CD4-positive, alpha-beta T cell (primary cell): ENCODE measurements at regions of chr12 and their contacts with region 1.

Region 1: DNA sequence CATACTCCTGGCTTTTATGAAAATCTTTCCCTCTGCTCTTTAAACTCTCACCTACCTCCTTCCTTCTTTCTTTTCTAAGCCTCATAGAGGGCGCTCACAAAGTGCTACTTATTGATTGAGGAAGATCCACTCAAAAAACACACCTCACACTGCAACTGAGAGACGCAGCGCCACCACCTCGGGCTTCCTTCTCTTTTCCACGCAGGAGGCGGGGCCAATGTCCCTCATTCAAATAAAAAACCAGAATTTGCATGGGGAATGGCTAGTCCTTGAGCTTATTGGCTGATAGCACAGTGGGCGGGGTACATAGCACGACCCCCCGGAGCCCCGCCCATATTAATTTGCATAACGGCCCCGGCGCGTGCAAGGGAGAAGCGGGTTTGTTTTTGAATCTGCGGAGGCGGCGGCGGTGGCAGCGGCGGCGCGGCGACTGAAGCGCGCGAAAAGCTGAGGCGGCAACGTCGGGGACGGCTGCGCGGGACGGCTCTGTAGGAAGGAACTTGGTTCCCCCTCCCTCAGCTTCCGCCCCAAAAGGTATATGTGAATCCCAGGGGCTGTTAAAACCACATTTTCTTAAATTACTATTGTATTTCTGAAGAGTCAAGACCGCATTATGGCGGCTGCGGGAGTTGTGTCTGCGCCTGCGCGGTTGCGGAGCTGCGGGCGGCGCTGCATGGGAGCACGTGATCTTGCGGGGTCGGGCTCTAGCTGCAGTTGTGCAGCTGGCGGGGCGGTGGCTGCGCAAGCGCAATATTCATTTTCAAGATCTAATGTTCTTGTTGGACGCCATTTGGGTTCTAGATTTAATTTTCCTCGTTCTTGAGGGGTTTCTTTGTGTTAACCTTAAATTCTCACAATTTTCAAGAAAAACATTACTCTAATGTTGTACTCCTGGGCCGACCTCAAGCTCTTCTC is at the start of gene ATF7IP:
- DNase-seq: peak; percentile 90 to 99 (median 95)
- ATAC-seq: peak; percentile 86
- H3K4me3 ChIP-seq: peak within 1 kb of the TSS; percentile 60
- H3K4me3 Mint-ChIP-seq: peak within 1 kb of the TSS; percentile 95
- H3K27ac ChIP-seq: peak within 1 kb of the TSS; percentile 89 to 93
- H3K27ac Mint-ChIP-seq: peak within 1 kb of the TSS; percentile 96
- H3K4me1 ChIP-seq: peaks cover 17% of the 10 kb centered on the region
- H3K4me1 Mint-ChIP-seq: peaks cover 51% of the 10 kb centered on the region
- H3K27me3 ChIP-seq: no peaks in the 10 kb centered on the region
- H3K27me3 Mint-ChIP-seq: no peaks in the 10 kb centered on the region
- CTCF ChIP-seq: peak; percentile 58
- total RNA-seq, gene ATF7IP: 134 to 143 TPM

Region 2: GRCh38 chr12:14185427-14186192 is 179.9 kb before region 1 on chr12:
- CTCF ChIA-PET with region 1: no interaction called
- POLR2A ChIA-PET with region 1: no interaction called
- intact Hi-C with region 1: no loop called
- DNase-seq: peak in 6 of 14 experiments; percentile 2 to 52 (median 29)
- ATAC-seq: no peak
- H3K4me3 ChIP-seq: no peak overlapping the region
- H3K4me3 Mint-ChIP-seq: no peak overlapping the region
- H3K27ac ChIP-seq: no peak overlapping the region
- H3K27ac Mint-ChIP-seq: no peak overlapping the region
- H3K4me1 ChIP-seq: no peaks in the 10 kb centered on the region
- H3K4me1 Mint-ChIP-seq: no peaks in the 10 kb centered on the region
- H3K27me3 ChIP-seq: no peaks in the 10 kb centered on the region
- H3K27me3 Mint-ChIP-seq: peaks cover 6% of the 10 kb centered on the region
- CTCF ChIP-seq: peak; percentile 52

Region 3: DNA sequence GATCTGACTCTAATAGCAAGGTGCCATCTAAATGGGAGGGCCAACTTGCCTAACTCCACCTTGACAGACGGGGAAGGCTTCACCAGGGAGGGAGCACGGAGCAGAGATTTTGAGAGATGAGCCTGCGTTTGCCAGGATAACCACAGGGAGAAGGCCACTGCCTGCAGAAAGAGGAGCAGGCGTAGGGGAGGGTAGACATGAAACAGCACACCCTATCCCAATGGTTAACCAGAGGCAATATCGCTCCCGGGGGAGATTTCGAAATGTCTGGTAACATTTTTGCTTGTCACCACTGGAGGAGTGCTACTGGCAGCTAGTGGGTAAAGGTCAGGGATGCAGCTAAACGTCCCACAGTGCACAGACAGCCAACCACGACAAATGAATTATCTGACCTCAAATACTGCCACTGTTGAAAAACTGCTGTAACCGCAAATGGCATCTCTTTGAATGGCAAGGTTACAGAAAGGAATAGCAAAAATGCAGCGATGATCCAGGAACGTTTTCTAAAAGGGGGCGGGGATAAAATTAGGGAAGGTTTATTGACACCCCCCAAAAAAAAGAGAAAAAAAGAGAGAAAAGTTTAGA is 126.1 kb before region 1 on chr12:
- CTCF ChIA-PET with region 1: interaction called, 11 read pairs
- POLR2A ChIA-PET with region 1: interaction called, 59 read pairs
- intact Hi-C with region 1: loop called in 1 of 2 experiments (anchors 2 kb)
- DNase-seq: peak in 5 of 14 experiments; percentile 8 to 66 (median 54)
- ATAC-seq: peak; percentile 62
- H3K4me3 ChIP-seq: peak overlapping the region; percentile 49
- H3K4me3 Mint-ChIP-seq: peak overlapping the region; percentile 88
- H3K27ac ChIP-seq: peak overlapping the region in 1 of 2 donors; percentile 18
- H3K27ac Mint-ChIP-seq: peak overlapping the region; percentile 87
- H3K4me1 ChIP-seq: peaks cover 19% of the 10 kb centered on the region
- H3K4me1 Mint-ChIP-seq: peaks cover 20% of the 10 kb centered on the region
- H3K27me3 ChIP-seq: no peaks in the 10 kb centered on the region
- H3K27me3 Mint-ChIP-seq: no peaks in the 10 kb centered on the region
- CTCF ChIP-seq: no peak

Region 4: GRCh38 chr12:14272956-14273907 is 92.3 kb before region 1 on chr12:
- CTCF ChIA-PET with region 1: no interaction called
- POLR2A ChIA-PET with region 1: interaction called, 17 read pairs
- intact Hi-C with region 1: no loop called
- DNase-seq: peak in 3 of 14 experiments; percentile 17 to 53 (median 42)
- ATAC-seq: no peak
- H3K4me3 ChIP-seq: no peak overlapping the region
- H3K4me3 Mint-ChIP-seq: no peak overlapping the region
- H3K27ac ChIP-seq: no peak overlapping the region
- H3K27ac Mint-ChIP-seq: no peak overlapping the region
- H3K4me1 ChIP-seq: no peaks in the 10 kb centered on the region
- H3K4me1 Mint-ChIP-seq: peaks cover 26% of the 10 kb centered on the region
- H3K27me3 ChIP-seq: no peaks in the 10 kb centered on the region
- H3K27me3 Mint-ChIP-seq: no peaks in the 10 kb centered on the region
- CTCF ChIP-seq: no peak

Region 5: DNA sequence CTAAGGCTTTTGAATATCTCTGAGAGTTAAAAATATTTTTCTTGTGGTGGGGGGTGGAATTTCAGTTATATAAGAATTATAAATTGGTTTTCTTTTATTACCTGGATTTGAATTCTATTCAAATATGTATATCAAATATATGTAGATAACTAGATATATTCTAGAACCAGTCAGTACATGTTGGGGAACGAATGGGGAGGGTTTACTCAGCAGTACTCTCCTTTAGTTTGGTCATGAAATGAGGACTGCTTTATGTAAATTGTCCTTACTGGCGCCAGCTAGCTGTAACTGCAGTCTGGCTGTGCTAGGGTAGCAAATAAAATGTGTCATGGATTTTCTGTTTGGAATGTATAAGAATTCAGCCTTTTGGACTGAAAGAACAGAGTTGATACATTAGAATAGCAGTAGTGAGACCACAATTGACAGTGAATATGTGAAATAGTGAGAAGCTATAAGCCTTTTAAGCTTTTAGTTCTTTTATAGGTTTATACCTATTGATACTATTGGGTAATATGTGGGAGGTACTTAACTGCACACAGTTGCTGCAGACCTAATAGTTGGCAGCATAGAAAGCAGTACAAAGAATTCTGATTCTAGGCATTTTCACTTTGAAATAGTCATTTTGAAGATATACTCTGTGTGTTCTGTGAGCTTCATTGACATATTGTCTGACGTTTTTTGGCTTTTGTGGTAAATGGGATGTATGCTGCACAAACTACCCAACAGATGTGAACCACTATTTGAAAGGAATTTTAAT is 28.9 kb after region 1 on chr12:
- CTCF ChIA-PET with region 1: interaction called, 31 read pairs
- POLR2A ChIA-PET with region 1: interaction called, 201 read pairs
- intact Hi-C with region 1: loop called (anchors 2 kb)
- DNase-seq: peak in 7 of 14 experiments; percentile 15 to 86 (median 36)
- ATAC-seq: peak; percentile 70
- H3K4me3 ChIP-seq: peak overlapping the region; percentile 10
- H3K4me3 Mint-ChIP-seq: peak overlapping the region; percentile 83
- H3K27ac ChIP-seq: peak overlapping the region; percentile 58 to 66
- H3K27ac Mint-ChIP-seq: peak overlapping the region; percentile 91
- H3K4me1 ChIP-seq: peaks cover 25% of the 10 kb centered on the region
- H3K4me1 Mint-ChIP-seq: peaks cover 90% of the 10 kb centered on the region
- H3K27me3 ChIP-seq: no peaks in the 10 kb centered on the region
- H3K27me3 Mint-ChIP-seq: no peaks in the 10 kb centered on the region
- CTCF ChIP-seq: no peak

Region 6: GRCh38 chr12:14417715-14418114 is 52.2 kb after region 1 on chr12:
- CTCF ChIA-PET with region 1: interaction called, 11 read pairs
- POLR2A ChIA-PET with region 1: interaction called, 207 read pairs
- intact Hi-C with region 1: loop called (anchors 1 to 2 kb)
- DNase-seq: peak; percentile 34 to 91 (median 62)
- ATAC-seq: peak; percentile 65
- H3K4me3 ChIP-seq: peak overlapping the region; percentile 33
- H3K4me3 Mint-ChIP-seq: peak overlapping the region; percentile 82
- H3K27ac ChIP-seq: peak overlapping the region; percentile 5 to 52
- H3K27ac Mint-ChIP-seq: peak overlapping the region; percentile 75
- H3K4me1 ChIP-seq: peaks cover 16% of the 10 kb centered on the region
- H3K4me1 Mint-ChIP-seq: peaks cover 62% of the 10 kb centered on the region
- H3K27me3 ChIP-seq: no peaks in the 10 kb centered on the region
- H3K27me3 Mint-ChIP-seq: no peaks in the 10 kb centered on the region
- CTCF ChIP-seq: no peak

Region 7: GRCh38 chr12:14803011-14803829 is 437.7 kb after region 1 on chr12 and contains the starts of genes C12orf60 and WBP11:
- CTCF ChIA-PET with region 1: no interaction called
- POLR2A ChIA-PET with region 1: interaction called, 11 read pairs
- intact Hi-C with region 1: no loop called
- DNase-seq: peak; percentile 73 to 98 (median 80)
- ATAC-seq: peak; percentile 95
- H3K4me3 ChIP-seq: peak within 1 kb of the TSS; percentile 89
- H3K4me3 Mint-ChIP-seq: no peak within 1 kb of the TSS
- H3K27ac ChIP-seq: peak within 1 kb of the TSS; percentile 88 to 96
- H3K27ac Mint-ChIP-seq: no peak within 1 kb of the TSS
- H3K4me1 ChIP-seq: peaks cover 7% of the 10 kb centered on the region
- H3K4me1 Mint-ChIP-seq: peaks cover 18% of the 10 kb centered on the region
- H3K27me3 ChIP-seq: no peaks in the 10 kb centered on the region
- H3K27me3 Mint-ChIP-seq: no peaks in the 10 kb centered on the region
- CTCF ChIP-seq: no peak
- total RNA-seq, gene C12orf60: 0.11 to 0.22 TPM
- total RNA-seq, gene WBP11: 169 to 188 TPM

Region 8: DNA sequence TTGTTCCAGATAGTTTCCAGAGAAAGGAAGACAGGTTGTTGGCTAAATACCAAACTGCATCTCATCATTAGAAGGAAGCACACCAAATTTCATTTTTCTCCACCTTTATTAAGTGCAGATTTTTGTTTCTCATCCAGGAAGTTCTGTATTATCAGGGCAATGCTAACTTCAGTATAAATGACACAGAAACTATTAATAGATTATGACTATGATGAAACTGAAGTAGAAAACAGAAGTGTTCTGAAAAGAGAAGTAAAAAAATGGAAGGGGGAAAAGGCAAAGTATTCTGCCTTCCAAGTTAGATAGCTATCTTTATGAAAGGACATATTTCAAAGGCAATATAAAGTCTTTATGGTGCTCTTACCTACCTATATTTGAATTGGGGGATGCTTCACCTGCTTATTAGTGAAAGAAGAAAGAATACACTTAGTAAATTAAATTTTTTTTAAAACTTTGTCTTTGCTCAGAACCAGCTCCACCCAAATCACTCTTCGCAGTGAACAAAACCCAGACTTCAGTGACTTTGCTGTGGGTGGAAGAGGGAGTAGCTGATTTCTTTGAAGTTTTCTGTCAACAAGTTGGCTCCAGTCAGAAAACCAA is 1180.7 kb after region 1 on chr12:
- CTCF ChIA-PET with region 1: no interaction called
- POLR2A ChIA-PET with region 1: interaction called, 10 read pairs
- intact Hi-C with region 1: no loop called
- DNase-seq: peak in 10 of 14 experiments; percentile 21 to 81 (median 45)
- ATAC-seq: peak; percentile 93
- H3K4me3 ChIP-seq: peak overlapping the region; percentile 19
- H3K4me3 Mint-ChIP-seq: peak overlapping the region; percentile 83
- H3K27ac ChIP-seq: peak overlapping the region; percentile 59 to 67
- H3K27ac Mint-ChIP-seq: peak overlapping the region; percentile 100
- H3K4me1 ChIP-seq: peaks cover 22% of the 10 kb centered on the region
- H3K4me1 Mint-ChIP-seq: peaks cover 85% of the 10 kb centered on the region
- H3K27me3 ChIP-seq: no peaks in the 10 kb centered on the region
- H3K27me3 Mint-ChIP-seq: no peaks in the 10 kb centered on the region
- CTCF ChIP-seq: no peak